Activated CD4-positive, alpha-beta memory T cell treated with anti-CD3 and anti-CD28 coated beads for 36 hours (primary cell): ENCODE measurements at regions of chr15 and their contacts with region 1.

Region 1: DNA sequence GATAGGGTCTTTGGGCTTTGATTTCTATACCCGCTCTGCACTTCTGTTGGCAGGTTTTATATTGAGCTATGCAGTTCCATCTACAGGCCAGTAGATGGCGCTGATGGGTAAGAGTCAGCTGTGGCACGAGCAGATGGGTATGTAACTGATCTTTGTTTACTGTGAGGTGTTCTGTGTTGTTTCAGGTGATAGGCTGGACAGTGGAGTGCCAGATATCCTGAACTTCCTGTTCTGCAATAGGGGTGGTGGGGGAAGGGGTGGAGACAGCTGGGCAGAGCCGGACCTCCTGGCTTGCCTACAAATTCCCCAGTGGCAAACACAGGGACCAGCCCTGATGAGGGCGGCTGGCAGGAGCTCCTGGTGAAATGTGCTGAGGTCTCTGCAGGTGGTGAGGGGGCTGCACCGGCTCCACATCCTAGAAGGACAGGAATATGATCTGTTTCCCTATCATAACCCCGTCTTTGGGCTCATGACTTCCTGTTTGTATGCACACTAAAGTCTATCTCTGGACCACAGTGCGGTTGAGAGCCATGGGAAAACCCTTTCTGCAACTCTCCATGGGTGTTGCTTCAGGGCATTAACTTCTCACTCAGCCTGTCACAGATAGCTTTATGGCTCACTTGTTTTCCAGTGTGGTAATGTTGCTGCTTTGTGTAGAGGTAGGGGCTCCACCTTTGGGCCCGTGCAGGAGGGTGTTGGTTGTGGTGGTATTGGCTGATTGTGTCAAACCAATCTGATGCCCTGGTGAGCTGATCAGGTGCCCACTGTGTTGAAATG is 13.4 kb upstream of the FAM98B start:
- DNase-seq: peak; percentile 60
- H3K4me3 Mint-ChIP-seq: no peak overlapping the region
- H3K27ac Mint-ChIP-seq: peak overlapping the region; percentile 6
- H3K4me1 Mint-ChIP-seq: peaks cover 5% of the 10 kb centered on the region
- H3K27me3 Mint-ChIP-seq: peaks cover 11% of the 10 kb centered on the region

Region 2: GRCh38 chr15:38424101-38424552 is 16.4 kb before region 1 on chr15:
- CTCF ChIA-PET with region 1: interaction called, 34 read pairs
- POLR2A ChIA-PET with region 1: no interaction called
- intact Hi-C with region 1: no loop called
- DNase-seq: no peak
- H3K4me3 Mint-ChIP-seq: no peak overlapping the region
- H3K27ac Mint-ChIP-seq: no peak overlapping the region
- H3K4me1 Mint-ChIP-seq: no peaks in the 10 kb centered on the region
- H3K27me3 Mint-ChIP-seq: peaks cover 5% of the 10 kb centered on the region

Region 3: DNA sequence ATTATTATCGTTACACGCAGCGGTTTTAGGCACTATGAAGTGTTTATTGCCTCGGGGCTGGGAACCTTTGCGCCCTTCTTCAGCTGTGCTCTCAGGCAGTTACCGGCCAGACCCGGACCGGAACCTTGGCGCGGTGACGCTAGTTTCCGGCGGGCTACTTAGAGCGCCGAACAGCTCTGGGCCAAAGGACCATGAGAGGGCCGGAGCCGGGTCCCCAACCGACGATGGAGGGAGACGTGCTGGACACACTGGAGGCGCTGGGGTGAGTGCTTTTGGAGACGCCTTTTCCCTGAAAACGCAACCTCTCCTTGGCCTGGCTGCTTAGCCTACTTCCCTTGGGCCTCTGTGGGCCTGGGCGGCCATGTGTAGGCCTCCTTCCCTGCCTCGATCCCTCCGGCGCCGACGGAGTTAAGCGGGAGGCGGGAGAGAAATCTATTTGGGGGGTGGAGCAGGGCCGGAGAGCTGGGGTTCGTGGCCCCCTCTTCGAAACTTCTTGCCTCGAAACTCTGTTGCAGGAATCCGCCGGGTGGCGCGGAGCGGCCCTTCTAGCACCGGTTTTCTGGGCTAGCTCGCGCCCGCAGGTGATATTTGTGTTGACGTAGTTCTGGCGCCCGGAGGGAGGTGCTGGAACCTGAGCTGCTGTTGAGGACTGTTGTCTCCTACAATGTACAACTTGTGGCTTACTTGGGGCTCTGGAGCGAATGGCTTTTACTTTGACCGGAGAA is 13.6 kb after region 1 on chr15 and contains the start of gene FAM98B:
- CTCF ChIA-PET with region 1: interaction called, 65 read pairs
- POLR2A ChIA-PET with region 1: interaction called, 5 read pairs
- intact Hi-C with region 1: no loop called
- DNase-seq: peak; percentile 93
- H3K4me3 Mint-ChIP-seq: peak within 1 kb of the TSS; percentile 93
- H3K27ac Mint-ChIP-seq: peak within 1 kb of the TSS; percentile 89
- H3K4me1 Mint-ChIP-seq: peaks cover 22% of the 10 kb centered on the region
- H3K27me3 Mint-ChIP-seq: no peaks in the 10 kb centered on the region
- total RNA-seq, gene FAM98B: 40.2 to 44.7 TPM

Region 4: GRCh38 chr15:38461066-38461833 is 20.7 kb after region 1 on chr15:
- CTCF ChIA-PET with region 1: interaction called, 17 read pairs
- POLR2A ChIA-PET with region 1: no interaction called
- intact Hi-C with region 1: no loop called
- DNase-seq: no peak
- H3K4me3 Mint-ChIP-seq: no peak overlapping the region
- H3K27ac Mint-ChIP-seq: no peak overlapping the region
- H3K4me1 Mint-ChIP-seq: peaks cover 36% of the 10 kb centered on the region
- H3K27me3 Mint-ChIP-seq: no peaks in the 10 kb centered on the region

Region 5: DNA sequence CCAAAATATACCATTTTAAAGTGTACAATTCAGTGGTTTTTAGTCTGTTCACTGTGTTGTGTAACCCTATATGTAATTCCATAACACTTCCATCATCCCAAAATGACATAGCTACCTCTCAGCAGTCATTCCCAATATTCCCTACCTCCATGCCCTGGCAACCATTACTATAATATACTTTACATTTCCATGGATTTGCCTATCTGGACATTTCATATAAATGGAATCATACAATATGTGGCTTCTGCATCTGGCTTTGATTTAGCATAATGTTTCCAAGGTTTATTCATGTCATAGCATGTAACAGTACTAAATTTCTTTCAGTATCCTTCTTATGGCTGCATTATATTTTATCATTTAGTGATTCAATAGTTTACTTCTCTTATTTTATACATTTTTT is 38.7 kb after region 1 on chr15:
- CTCF ChIA-PET with region 1: interaction called, 13 read pairs
- POLR2A ChIA-PET with region 1: no interaction called
- intact Hi-C with region 1: no loop called
- DNase-seq: no peak
- H3K4me3 Mint-ChIP-seq: no peak overlapping the region
- H3K27ac Mint-ChIP-seq: no peak overlapping the region
- H3K4me1 Mint-ChIP-seq: peaks cover 29% of the 10 kb centered on the region
- H3K27me3 Mint-ChIP-seq: no peaks in the 10 kb centered on the region

Region 6: GRCh38 chr15:38514601-38515000 is 74.1 kb after region 1 on chr15:
- CTCF ChIA-PET with region 1: interaction called, 10 read pairs
- POLR2A ChIA-PET with region 1: no interaction called
- intact Hi-C with region 1: no loop called
- DNase-seq: no peak
- H3K4me3 Mint-ChIP-seq: no peak overlapping the region
- H3K27ac Mint-ChIP-seq: peak overlapping the region; percentile 58
- H3K4me1 Mint-ChIP-seq: peaks cover 35% of the 10 kb centered on the region
- H3K27me3 Mint-ChIP-seq: no peaks in the 10 kb centered on the region

Region 7: DNA sequence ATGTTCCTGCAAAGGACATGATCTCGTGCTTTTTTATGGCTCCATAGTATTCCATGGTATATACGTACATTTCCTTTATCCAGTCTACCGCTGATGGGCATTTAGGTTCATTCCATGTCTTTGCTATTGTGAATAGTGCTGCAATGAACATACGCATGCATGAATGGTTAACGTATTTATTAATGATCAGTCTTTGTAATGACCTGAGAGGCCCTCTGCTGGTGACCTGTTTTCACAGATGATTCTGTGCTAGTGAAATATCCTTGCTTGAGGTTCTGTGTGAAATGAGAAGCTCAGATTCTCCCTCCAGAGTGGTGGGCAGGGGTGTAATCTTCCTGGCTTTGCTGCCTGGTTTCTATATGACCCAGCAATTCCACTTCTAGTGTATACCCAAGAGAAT is 284.3 kb after region 1 on chr15:
- CTCF ChIA-PET with region 1: interaction called, 13 read pairs
- POLR2A ChIA-PET with region 1: no interaction called
- intact Hi-C with region 1: no loop called
- DNase-seq: no peak
- H3K4me3 Mint-ChIP-seq: no peak overlapping the region
- H3K27ac Mint-ChIP-seq: no peak overlapping the region
- H3K4me1 Mint-ChIP-seq: no peaks in the 10 kb centered on the region
- H3K27me3 Mint-ChIP-seq: peaks cover 2% of the 10 kb centered on the region